AG04450 (cell line): ENCODE measurements at regions of chr2 and their contacts with region 1.

Region 1: DNA sequence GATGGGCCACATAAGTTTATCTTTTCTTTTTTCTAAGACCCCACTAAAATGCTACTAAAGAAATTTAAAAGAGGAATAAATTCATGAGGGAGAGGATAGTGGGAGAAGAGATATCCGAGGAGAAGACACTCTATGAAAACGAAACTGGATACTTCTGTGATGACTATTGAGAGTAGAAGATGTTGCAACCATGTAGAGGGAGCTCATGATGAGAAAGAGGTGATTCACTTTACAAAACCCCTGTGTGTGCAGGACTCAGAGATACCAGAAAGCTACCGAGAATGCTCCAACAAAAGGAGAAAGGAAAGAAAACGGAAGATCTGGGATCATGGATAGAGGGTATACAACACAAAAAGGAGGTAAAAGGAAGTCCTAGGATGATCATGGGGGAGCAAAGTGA is 34.9 kb downstream of the SLC38A11 start:
- DNase-seq: peak; percentile 81
- H3K4me3 ChIP-seq: peak overlapping the region; percentile 43
- H3K27ac ChIP-seq: peak overlapping the region; percentile 81
- H3K27me3 ChIP-seq: no peaks in the 10 kb centered on the region
- CTCF ChIP-seq: no peak

Region 2: GRCh38 chr2:164737612-164738081 is 182.8 kb before region 1 on chr2:
- CTCF ChIA-PET with region 1: interaction called, 14 read pairs
- POLR2A ChIA-PET with region 1: no interaction called
- DNase-seq: peak; percentile 23
- H3K4me3 ChIP-seq: no peak overlapping the region
- H3K27ac ChIP-seq: no peak overlapping the region
- H3K27me3 ChIP-seq: no peaks in the 10 kb centered on the region
- CTCF ChIP-seq: peak; percentile 79

Region 3: DNA sequence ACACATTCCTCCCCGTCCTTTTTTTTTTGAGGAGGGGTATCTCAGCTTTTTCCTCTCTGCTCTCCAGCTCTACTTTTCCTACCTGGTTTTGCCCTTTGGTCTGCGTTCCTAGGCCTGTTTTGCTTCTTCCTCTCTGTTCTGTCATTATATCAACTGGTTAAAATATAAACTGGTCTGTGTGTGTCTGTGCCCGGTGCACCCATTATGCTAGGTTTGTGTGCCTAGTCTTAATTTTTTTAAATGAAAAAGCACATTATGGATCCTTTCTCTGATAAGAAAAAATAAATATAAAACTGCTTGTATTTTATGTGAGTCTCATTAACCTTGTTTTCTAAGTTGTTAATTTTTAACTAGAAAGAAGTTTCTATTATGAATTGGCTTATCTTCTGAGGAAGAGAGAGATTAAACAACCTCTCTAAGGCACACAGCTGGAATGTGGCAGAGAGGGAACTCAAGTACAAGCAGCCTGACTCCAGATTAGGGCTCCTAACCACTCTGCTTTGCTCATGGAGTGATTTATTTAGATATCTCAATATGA is 17.5 kb after region 1 on chr2:
- CTCF ChIA-PET with region 1: no interaction called
- POLR2A ChIA-PET with region 1: no interaction called
- DNase-seq: no peak
- H3K4me3 ChIP-seq: no peak overlapping the region
- H3K27ac ChIP-seq: no peak overlapping the region
- H3K27me3 ChIP-seq: no peaks in the 10 kb centered on the region
- CTCF ChIP-seq: no peak

Region 4: DNA sequence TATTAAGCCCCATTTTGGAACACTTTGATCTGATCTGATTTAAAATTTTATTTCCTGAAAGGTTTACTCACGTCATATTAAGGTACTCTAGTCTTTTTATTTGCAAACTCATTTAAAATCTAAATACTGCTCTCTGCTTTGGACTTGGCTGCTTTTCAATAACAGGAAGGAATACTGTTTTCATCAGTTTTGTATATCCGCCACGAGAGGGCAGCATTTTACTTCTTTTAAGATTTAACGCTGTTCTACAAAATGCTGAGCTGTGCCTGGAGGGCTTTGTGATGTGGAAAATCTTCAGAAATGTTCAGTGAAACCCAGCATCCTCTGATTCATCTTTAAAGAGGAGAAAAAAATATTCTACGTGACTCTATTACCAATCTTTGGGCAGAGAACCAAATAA is 72.4 kb after region 1 on chr2:
- CTCF ChIA-PET with region 1: interaction called, 15 read pairs
- POLR2A ChIA-PET with region 1: no interaction called
- DNase-seq: peak; percentile 61
- H3K4me3 ChIP-seq: no peak overlapping the region
- H3K27ac ChIP-seq: no peak overlapping the region
- H3K27me3 ChIP-seq: no peaks in the 10 kb centered on the region
- CTCF ChIP-seq: peak; percentile 49